CD8-positive, alpha-beta T cell (primary cell): ENCODE measurements at regions of chr16 and their contacts with region 1.

Region 1: DNA sequence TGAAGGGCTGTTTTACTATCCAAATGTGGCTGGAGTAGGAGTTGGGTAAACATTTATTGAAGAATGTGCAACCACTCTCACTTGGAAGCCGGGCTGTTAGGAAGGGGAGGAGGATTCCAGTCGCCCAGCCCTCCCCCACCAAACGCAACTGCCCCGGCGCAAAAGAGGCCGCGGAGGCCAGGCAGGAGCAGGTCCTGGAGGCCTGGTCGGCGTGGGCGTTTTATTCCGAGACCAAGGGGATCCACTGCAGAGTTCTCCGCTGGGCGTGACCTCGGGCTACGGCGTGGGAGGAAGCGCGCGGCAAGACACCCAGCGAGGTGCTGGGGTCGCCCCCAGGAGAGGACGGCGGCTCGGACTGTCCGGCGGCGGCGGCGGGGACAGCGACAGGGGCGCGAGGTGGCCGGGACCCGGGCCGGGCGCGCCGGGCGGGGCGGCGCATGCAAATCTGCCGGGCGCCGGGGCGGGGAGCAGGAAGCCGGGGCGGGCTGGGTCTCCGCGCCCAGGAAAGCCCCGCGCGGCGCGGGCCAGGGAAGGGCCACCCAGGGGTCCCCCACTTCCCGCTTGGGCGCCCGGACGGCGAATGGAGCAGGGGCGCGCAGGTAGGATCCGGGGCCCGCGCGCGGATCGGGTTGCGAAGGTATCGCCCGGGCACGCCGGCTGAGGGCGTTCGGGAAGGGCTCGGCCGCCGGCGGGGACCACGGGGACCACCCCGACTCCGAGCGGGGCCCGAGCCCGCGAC is at the start of gene IL4R:
- DNase-seq: peak; percentile 19 to 84 (median 64)
- ATAC-seq: peak; percentile 51
- H3K4me3 ChIP-seq: peak within 1 kb of the TSS; percentile 88 to 90
- H3K4me3 Mint-ChIP-seq: peak within 1 kb of the TSS; percentile 94
- H3K27ac ChIP-seq: peak within 1 kb of the TSS; percentile 83 to 87
- H3K27ac Mint-ChIP-seq: peak within 1 kb of the TSS; percentile 98
- H3K4me1 ChIP-seq: peaks cover 43% of the 10 kb centered on the region
- H3K4me1 Mint-ChIP-seq: peaks cover 47% of the 10 kb centered on the region
- H3K27me3 ChIP-seq: no peaks in the 10 kb centered on the region
- H3K27me3 Mint-ChIP-seq: no peaks in the 10 kb centered on the region
- CTCF ChIP-seq: no peak
- total RNA-seq, gene IL4R: 224 to 240 TPM

Region 2: DNA sequence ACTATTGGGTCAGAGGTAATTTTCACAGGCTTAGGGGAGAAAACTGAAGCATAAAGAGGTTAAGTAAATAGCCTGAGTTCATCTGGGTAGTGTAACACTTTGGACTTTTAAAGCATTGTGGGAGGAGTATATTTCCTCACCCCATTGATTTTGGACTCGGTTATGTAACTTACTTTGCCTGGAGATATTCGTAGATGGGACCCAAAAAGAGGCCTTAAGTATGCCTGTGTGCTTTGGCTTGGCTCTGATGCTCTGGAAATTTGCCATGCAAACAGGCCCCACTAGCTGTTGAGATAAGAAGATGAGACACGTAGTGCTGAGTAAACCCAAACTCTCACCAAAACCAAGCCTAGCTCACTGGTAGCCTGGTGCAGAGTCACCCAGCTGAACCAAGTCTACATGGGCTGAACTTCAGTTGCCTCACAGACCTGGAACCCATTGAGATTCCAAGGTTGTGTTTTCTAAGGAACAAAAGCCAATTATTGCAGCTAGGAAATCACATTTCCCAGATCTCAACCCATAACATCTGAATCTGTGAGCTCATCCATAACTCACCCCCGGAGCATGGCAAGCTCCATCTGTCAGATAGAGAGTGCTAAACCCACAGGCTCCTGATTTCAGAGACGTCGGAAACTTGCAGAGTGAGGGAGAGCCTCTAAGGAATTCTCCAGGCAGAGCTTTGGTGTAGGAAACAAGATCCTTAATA is 782.9 kb before region 1 on chr16:
- CTCF ChIA-PET with region 1: no interaction called
- POLR2A ChIA-PET with region 1: no interaction called
- intact Hi-C with region 1: no loop called
- DNase-seq: no peak
- ATAC-seq: no peak
- H3K4me3 ChIP-seq: no peak overlapping the region
- H3K4me3 Mint-ChIP-seq: no peak overlapping the region
- H3K27ac ChIP-seq: no peak overlapping the region
- H3K27ac Mint-ChIP-seq: no peak overlapping the region
- H3K4me1 ChIP-seq: no peaks in the 10 kb centered on the region
- H3K4me1 Mint-ChIP-seq: no peaks in the 10 kb centered on the region
- H3K27me3 ChIP-seq: no peaks in the 10 kb centered on the region
- H3K27me3 Mint-ChIP-seq: peaks cover 6% of the 10 kb centered on the region
- CTCF ChIP-seq: no peak

Region 3: GRCh38 chr16:27258241-27258734 is 55.3 kb before region 1 on chr16:
- CTCF ChIA-PET with region 1: no interaction called
- POLR2A ChIA-PET with region 1: no interaction called
- intact Hi-C with region 1: no loop called
- DNase-seq: no peak
- ATAC-seq: no peak
- H3K4me3 ChIP-seq: no peak overlapping the region
- H3K4me3 Mint-ChIP-seq: no peak overlapping the region
- H3K27ac ChIP-seq: no peak overlapping the region
- H3K27ac Mint-ChIP-seq: no peak overlapping the region
- H3K4me1 ChIP-seq: peaks cover 19% of the 10 kb centered on the region
- H3K4me1 Mint-ChIP-seq: peaks cover 64% of the 10 kb centered on the region
- H3K27me3 ChIP-seq: no peaks in the 10 kb centered on the region
- H3K27me3 Mint-ChIP-seq: no peaks in the 10 kb centered on the region
- CTCF ChIP-seq: no peak

Region 4: DNA sequence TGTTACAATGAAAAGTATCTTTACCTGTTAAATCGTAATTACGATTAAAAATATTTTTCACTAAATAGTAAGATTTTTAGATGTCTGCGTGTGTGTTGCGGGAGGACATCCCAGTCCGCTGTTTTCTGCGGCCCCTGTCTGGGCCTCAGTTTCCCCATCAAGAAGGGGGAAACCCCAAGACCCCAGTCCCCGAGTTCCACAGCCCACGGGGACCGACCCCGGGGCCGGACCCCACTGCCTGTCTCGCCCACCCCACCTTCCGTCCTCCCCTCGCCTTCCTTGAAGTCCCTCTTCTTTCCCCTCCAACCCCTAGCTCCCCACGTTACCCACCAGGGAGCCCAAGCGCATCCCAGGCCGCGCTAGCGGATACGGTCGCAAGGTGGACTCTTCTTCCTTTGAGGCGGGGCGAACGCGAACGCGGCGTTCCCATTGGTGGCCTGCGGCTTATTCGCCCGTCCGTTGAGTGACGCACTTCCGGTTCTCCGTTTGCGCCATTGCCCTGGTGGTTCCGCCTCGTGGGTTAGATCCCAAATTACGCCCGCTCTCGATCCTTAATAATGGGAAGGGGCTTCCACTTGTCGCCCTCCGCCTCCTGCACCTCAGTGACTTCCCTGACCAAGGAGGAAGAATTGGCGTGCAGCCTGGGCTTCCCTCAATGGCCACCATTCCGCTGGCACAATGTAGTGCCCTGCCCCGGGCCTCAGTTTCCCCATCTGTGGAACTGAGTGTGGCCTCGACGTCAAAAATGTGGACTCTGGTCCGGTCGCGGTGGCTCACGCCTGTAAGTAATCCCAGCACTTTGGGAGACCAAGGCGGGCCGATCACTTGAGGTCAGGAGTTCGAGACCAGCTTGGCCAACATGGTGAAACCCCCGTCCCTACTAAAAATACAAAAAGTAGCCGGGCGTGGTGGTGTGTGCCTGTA is 45.0 kb before region 1 on chr16 and contains the start of gene NSMCE1:
- CTCF ChIA-PET with region 1: no interaction called
- POLR2A ChIA-PET with region 1: no interaction called
- intact Hi-C with region 1: loop called (anchors 2 to 5 kb)
- DNase-seq: peak; percentile 92 to 98 (median 96)
- ATAC-seq: peak; percentile 98
- H3K4me3 ChIP-seq: peak within 1 kb of the TSS; percentile 65 to 90
- H3K4me3 Mint-ChIP-seq: peak within 1 kb of the TSS; percentile 95
- H3K27ac ChIP-seq: peak within 1 kb of the TSS; percentile 93 to 97
- H3K27ac Mint-ChIP-seq: peak within 1 kb of the TSS; percentile 99
- H3K4me1 ChIP-seq: peaks cover 35% of the 10 kb centered on the region
- H3K4me1 Mint-ChIP-seq: peaks cover 54% of the 10 kb centered on the region
- H3K27me3 ChIP-seq: no peaks in the 10 kb centered on the region
- H3K27me3 Mint-ChIP-seq: no peaks in the 10 kb centered on the region
- CTCF ChIP-seq: no peak
- total RNA-seq, gene NSMCE1: 29.6 to 30.1 TPM

Region 5: GRCh38 chr16:27285676-27286196 is 27.9 kb before region 1 on chr16:
- CTCF ChIA-PET with region 1: no interaction called
- POLR2A ChIA-PET with region 1: no interaction called
- intact Hi-C with region 1: no loop called
- DNase-seq: no peak
- ATAC-seq: no peak
- H3K4me3 ChIP-seq: no peak overlapping the region
- H3K4me3 Mint-ChIP-seq: no peak overlapping the region
- H3K27ac ChIP-seq: no peak overlapping the region
- H3K27ac Mint-ChIP-seq: no peak overlapping the region
- H3K4me1 ChIP-seq: peaks cover 9% of the 10 kb centered on the region
- H3K4me1 Mint-ChIP-seq: peaks cover 29% of the 10 kb centered on the region
- H3K27me3 ChIP-seq: no peaks in the 10 kb centered on the region
- H3K27me3 Mint-ChIP-seq: no peaks in the 10 kb centered on the region
- CTCF ChIP-seq: no peak

Region 6: DNA sequence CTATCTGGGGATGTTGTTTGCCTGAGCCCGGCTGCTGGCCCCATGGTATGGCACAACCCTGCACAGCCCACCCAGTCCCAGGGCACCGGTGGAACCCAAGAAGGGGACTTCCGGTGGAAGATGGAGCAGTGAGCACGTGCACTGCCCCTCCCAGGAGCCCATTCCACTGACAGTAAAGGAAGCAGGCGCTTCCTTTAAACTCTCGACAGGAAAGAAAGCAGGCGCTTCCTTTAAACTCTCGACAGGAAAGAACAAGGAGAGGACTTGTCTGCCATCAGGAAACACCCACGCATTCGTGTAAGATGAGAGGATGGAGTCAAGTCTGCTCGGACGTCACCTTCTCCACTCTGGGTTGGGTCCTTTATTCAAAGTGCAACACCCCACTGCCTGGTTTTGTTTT is 142.1 kb after region 1 on chr16:
- CTCF ChIA-PET with region 1: interaction called, 7 read pairs
- POLR2A ChIA-PET with region 1: no interaction called
- intact Hi-C with region 1: loop called (anchors 2 to 5 kb)
- DNase-seq: peak in 1 of 9 experiments; percentile 64
- ATAC-seq: peak; percentile 30
- H3K4me3 ChIP-seq: no peak overlapping the region
- H3K4me3 Mint-ChIP-seq: peak overlapping the region; percentile 27
- H3K27ac ChIP-seq: peak overlapping the region in 1 of 2 experiments; percentile 39
- H3K27ac Mint-ChIP-seq: peak overlapping the region; percentile 83
- H3K4me1 ChIP-seq: peaks cover 53% of the 10 kb centered on the region
- H3K4me1 Mint-ChIP-seq: peaks cover 74% of the 10 kb centered on the region
- H3K27me3 ChIP-seq: no peaks in the 10 kb centered on the region
- H3K27me3 Mint-ChIP-seq: no peaks in the 10 kb centered on the region
- CTCF ChIP-seq: no peak

Region 7: DNA sequence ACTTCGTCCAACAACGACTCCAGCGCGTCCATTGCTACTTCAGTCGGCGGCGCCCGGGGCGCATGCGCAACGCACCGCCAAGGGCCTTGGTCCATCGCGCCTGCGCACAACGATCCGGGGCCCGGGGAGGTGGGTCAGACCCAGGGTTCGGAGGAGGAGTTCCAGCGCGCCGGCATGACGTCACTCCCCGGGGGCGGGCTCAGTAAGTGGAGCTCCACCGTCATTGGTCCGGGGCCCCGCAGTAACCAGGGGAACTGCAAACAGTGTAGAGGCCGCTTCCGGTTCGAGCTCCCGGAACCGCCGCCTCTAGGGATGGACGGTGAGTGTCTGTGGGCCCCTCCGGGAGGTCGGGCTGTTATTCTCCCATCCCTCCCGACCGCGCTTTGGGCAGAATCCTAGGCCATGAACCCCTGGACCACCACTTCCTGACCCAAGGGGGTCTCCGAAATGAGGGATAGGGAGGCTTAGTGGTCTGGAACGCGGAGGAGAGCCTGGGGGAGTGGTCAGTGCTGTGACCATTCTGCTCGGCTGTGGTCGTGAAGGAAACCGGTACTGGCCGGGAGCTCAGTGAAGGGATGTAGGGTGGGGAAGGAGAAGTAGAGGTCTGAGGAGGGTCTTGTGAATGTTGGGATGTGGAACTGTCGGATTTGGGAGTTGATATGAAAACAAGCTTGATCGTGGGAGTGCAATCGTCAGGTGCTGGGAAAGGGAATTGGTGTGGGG is 236.4 kb after region 1 on chr16 and contains the starts of genes GTF3C1 and KATNIP:
- CTCF ChIA-PET with region 1: no interaction called
- POLR2A ChIA-PET with region 1: no interaction called
- intact Hi-C with region 1: loop called in 1 of 2 experiments (anchors 5 kb)
- DNase-seq: peak; percentile 99 to 100 (median 100)
- ATAC-seq: peak; percentile 100
- H3K4me3 ChIP-seq: peak within 1 kb of the TSS; percentile 97
- H3K4me3 Mint-ChIP-seq: peak within 1 kb of the TSS; percentile 92
- H3K27ac ChIP-seq: peak within 1 kb of the TSS; percentile 91 to 94
- H3K27ac Mint-ChIP-seq: peak within 1 kb of the TSS; percentile 94
- H3K4me1 ChIP-seq: peaks cover 29% of the 10 kb centered on the region
- H3K4me1 Mint-ChIP-seq: peaks cover 46% of the 10 kb centered on the region
- H3K27me3 ChIP-seq: no peaks in the 10 kb centered on the region
- H3K27me3 Mint-ChIP-seq: no peaks in the 10 kb centered on the region
- CTCF ChIP-seq: no peak
- total RNA-seq, gene GTF3C1: 110 to 114 TPM
- total RNA-seq, gene KATNIP: 16.0 to 18.9 TPM